ENCODE measurements at regions of chr4 and their contacts with region 1.

Region 1: DNA sequence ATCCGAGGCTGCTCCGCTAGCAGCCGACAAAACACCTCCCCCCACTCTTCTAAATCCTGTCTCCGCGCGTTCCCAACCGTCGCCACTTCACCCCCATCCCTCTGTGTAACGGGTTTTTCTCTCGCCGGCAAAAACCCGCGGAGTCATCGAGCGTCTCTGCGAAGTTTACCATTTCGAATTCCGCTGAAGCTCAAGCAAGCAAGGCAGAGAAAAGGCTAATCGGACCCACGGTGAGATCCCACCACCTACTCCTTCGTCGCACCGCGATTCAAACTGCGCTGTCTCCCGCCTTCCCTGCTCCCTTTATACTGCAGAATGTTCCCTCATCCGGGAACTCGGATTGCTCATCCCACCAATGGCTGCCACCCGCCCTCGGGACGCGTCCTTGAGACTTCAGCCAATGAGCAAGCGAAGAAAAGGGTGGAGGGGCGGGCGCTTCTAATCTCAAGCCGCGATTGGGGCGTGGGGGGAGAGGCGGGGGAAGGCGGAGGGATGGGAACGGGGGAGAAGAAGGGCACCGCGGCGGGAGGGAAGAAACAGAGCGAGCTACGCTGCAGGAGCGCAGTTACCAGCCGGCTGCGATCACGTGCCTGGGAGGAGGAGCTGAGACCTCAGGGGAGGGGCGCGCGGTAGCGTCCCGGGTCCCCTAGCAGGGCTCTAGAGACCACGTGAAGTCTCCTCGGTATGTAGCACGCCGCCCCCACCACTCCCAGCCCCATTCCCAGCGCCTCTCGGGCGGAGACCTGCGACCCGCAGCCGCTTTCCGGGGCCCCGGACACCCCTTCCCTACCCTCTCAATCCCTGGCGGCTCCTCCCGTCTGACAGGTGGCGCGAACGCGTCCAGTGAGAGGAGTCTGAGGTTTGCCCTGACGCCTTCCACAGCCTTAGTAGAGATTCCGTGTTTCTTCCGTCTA is at the start of gene H2AZ1:
- DNase-seq: peak; percentile 88
- H3K4me3 ChIP-seq: peak within 1 kb of the TSS; percentile 73
- H3K27me3 ChIP-seq: no peaks in the 10 kb centered on the region
- CTCF ChIP-seq: no peak
- polyA plus RNA-seq, gene H2AZ1: 335 and 405 TPM in 2 replicates

Region 2: DNA sequence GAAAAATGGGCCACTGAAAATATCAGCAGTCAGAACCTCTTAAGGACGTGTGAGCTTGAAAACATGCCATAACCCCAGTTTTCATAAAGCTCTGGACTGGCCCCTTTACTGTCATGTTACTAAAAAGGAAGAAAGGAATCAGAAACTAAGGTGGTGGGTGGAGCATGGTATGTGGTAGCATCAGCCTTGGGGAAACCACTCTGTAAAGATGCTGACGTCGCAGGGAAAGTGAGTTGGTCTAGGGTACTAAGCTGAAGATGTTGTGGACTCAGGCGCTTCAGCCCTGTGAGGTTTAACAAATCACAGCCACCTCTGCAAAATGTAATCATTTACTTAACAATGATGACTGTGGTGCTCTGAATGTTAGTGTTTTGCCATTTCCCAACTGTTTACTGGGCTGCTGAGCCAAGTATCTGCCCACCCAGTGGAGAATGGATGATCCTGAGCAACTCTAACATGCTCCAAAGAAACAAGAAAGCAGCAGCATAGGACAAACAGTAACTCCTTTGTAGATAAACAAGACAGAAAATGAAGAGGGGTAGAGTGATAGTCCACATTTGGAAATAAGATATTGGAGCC is 326.0 kb before region 1 on chr4:
- CTCF ChIA-PET with region 1: no interaction called
- POLR2A ChIA-PET with region 1: no interaction called
- DNase-seq: no peak
- H3K4me3 ChIP-seq: no peak overlapping the region
- H3K27me3 ChIP-seq: no peaks in the 10 kb centered on the region
- CTCF ChIP-seq: no peak

Region 3: DNA sequence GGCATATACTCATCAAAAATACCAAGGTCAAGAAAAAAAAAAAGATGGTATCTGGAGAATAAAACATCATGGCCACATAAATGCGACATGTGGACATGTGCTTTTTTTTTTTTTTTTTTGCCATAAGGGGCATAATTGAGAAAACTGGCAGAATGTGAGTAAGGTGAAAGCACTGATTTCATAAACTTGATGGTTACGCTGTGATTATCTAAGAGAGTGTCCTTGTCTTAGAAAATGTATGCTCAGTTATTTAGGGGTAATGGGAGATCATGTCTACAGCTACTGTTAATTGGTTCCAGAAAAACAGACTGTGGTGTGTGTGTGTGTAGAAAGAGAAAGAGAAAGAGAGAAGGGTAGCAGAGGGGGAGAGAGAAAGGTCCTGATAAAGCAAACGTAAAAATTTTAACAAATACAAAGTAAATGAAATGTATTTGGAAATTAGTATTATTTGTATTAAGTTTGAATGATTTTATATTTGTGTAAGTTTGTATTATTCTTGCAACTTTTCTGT is 12.0 kb before region 1 on chr4:
- CTCF ChIA-PET with region 1: interaction called, 3 read pairs
- POLR2A ChIA-PET with region 1: interaction called, 18 read pairs
- DNase-seq: no peak
- H3K4me3 ChIP-seq: no peak overlapping the region
- H3K27me3 ChIP-seq: no peaks in the 10 kb centered on the region
- CTCF ChIP-seq: no peak